OCI-LY7 (cell line): ENCODE measurements at regions of chr12 and their contacts with region 1.

Region 1: DNA sequence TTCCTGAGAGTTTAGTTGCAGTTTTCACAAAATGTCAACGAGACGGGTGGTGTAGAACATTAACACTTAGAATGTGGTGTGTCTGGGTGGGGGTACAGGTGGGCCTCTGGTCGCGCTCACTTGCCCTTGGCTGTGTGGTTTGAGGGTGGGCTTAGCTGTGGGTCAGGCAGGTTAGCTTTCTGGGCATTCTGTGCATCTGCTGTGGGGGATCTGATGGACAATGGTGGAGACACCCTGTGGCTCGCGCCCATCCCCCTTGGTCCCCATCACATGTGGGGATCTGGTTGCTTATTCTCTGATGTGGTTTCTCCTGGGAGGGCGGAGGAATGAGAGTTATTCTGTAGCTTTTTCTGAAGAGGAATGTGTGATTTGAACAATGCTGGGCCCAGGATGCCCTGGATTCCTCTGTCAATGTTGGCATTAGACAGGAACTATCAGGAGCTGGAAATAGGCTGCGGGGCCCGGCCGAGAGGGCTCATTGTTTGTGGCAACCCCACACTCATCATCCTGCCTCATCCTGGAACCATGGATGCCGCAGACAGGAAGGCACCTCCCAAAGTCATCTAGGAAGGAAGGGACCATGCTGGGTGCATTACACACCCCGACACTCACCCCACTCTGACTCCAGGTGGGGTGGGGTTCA is 101.6 kb downstream of the TSPAN9 start:
- DNase-seq: no peak
- H3K4me3 ChIP-seq: no peak overlapping the region
- H3K27ac ChIP-seq: no peak overlapping the region
- H3K4me1 ChIP-seq: peaks cover 29% of the 10 kb centered on the region
- CTCF ChIP-seq: no peak

Region 2: GRCh38 chr12:3229577-3229976 is 50.8 kb after region 1 on chr12:
- CTCF ChIA-PET with region 1: no interaction called
- POLR2A ChIA-PET with region 1: no interaction called
- intact Hi-C with region 1: loop called (anchors 1 kb)
- DNase-seq: peak; percentile 93
- H3K4me3 ChIP-seq: peak overlapping the region; percentile 19
- H3K27ac ChIP-seq: peak overlapping the region; percentile 72
- H3K4me1 ChIP-seq: peaks cover 40% of the 10 kb centered on the region
- CTCF ChIP-seq: no peak